HEK293 (cell line): ENCODE measurements at regions of chr11 and their contacts with region 1.

Region 1: DNA sequence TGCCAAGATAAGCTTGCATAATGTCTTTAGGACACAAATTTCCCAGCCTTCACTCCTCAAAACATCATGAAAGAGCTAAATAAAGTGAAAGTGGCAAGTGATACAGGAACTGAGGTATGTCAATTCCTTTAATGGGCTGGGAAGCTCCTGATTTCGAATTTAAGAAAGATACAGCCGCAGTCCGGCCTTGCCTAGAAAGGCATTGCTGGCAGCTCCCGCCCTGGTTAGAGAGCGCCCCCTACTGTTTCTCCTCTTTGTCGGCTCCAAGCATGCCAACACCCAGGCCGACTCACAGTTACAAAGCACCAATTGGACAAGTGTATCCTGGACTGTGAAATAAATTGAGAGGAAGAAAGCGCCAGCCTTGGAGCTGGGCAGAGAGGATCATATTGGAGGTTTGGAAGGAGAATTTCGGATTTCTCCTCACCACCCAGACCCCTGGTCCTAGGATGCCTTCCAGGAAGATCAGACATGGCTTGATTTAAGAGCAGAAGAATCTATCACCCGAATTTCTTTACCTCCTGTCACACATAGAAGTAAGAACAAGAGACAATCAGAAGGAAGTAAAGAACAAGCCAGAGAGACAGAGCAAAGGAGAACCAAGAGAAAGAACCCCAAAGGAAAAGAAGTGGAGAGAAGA is 84.0 kb downstream of the FAM76B start:
- H3K4me3 ChIP-seq: no peak overlapping the region
- H3K27ac ChIP-seq: no peak overlapping the region
- H3K4me1 ChIP-seq: no peaks in the 10 kb centered on the region
- CTCF ChIP-seq: peak; percentile 58; the same call in 1 of the 2 replicates

Region 2: DNA sequence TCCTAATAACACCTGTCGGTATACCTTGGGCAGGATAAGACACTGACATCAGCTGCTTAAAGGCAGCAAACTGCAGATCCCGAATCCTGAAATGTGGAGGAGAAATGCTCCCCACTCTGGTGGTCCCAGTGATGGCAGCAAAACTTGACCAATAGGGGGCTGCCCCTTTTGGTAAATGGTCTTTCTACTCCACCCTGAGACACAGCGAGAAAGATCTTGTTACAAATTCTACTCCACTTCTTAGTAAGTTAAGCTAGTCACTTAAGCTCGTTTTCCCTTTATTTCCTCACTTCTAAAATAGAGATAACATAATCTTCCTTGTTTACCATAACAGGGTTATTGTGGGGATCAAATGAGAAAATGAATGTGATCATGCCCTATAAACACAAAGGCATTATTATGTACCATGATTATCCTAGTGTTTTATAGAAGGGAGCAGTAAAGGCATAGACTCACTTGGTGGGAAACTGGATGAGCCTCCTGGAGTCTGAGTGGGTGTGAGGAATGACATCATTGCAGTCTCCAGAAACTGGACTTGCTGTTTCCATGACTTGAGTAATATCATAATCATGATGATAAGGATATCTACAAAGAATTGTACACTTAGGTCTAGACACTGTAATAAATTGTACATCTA is 565.1 kb before region 1 on chr11:
- CTCF ChIA-PET with region 1: no interaction called
- POLR2A ChIA-PET with region 1: no interaction called
- H3K4me3 ChIP-seq: no peak overlapping the region
- H3K27ac ChIP-seq: no peak overlapping the region
- H3K4me1 ChIP-seq: no peaks in the 10 kb centered on the region
- CTCF ChIP-seq: no peak

Region 3: DNA sequence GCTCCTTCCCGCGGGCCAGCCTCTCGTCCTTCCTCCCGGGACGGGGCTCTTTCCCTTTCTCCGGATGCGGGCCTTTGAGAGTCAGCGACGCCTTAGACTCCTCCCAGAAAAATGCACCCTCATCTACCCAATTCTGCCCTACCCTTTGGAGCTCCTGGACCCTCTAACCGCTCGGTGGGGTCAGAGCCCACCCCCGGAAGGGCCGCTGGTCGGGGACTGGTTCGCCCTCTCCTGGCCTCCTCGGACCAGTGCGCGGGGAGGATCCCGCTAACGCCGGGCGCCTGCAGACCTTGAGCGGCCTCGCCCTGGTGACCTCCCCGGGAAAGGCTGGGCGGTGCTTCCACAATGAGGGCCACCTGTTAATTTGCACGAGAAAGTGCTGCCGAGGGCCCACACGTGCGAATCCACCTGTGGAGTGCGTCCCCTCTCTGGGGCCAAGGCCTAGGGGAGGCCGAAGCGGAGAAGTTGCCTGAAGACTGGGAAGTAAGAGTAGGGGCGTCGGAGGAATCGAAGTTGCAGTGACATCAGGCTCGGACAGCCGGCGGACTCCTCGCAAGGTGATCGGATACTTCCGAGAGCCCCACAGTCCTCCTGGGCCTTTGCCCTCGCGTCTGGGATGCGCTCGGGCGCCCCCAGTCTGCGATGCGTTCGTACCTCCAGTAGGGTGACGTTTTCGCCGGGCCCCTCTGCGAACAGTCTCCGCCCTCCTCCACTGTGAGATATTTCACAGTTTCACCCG is 554.5 kb before region 1 on chr11:
- CTCF ChIA-PET with region 1: interaction called, 169 read pairs
- POLR2A ChIA-PET with region 1: no interaction called
- H3K4me3 ChIP-seq: peak overlapping the region; percentile 24
- H3K27ac ChIP-seq: no peak overlapping the region; the same call in 1 of the 2 replicates
- H3K4me1 ChIP-seq: no peaks in the 10 kb centered on the region; the same call in none of the 2 replicates
- CTCF ChIP-seq: peak; percentile 62; the same call in 1 of the 2 replicates

Region 4: GRCh38 chr11:95499516-95500135 is 206.0 kb before region 1 on chr11:
- CTCF ChIA-PET with region 1: interaction called, 10 read pairs
- POLR2A ChIA-PET with region 1: no interaction called
- H3K4me3 ChIP-seq: no peak overlapping the region
- H3K27ac ChIP-seq: no peak overlapping the region
- H3K4me1 ChIP-seq: peaks cover 6% of the 10 kb centered on the region
- CTCF ChIP-seq: no peak

Region 5: GRCh38 chr11:95545116-95545875 is 160.3 kb before region 1 on chr11:
- CTCF ChIA-PET with region 1: interaction called, 12 read pairs
- POLR2A ChIA-PET with region 1: no interaction called
- H3K4me3 ChIP-seq: no peak overlapping the region
- H3K27ac ChIP-seq: no peak overlapping the region
- H3K4me1 ChIP-seq: no peaks in the 10 kb centered on the region
- CTCF ChIP-seq: no peak

Region 6: DNA sequence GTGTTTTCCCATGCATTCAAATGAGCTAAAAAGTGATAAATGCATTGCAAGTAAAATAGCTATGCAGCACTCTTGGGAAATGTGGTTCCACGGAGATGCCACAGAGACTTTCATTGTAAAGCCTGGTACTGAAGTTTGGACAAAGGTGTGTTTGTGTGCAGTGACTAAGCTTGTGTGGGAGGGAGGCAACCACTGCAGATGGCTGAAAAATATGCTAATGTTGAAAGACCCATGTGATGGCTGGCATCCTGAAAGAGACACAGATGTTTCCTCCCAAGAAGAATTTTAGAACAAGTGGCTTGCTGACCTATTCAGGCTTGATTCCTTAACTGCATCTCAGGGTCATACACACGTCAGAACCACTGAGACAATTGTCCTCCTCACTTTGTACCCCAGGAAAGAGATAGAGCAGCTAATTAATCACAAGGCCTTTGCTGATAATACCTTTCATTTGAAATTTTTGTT is 10.2 kb after region 1 on chr11:
- CTCF ChIA-PET with region 1: interaction called, 15 read pairs
- POLR2A ChIA-PET with region 1: no interaction called
- H3K4me3 ChIP-seq: no peak overlapping the region
- H3K27ac ChIP-seq: no peak overlapping the region
- H3K4me1 ChIP-seq: no peaks in the 10 kb centered on the region
- CTCF ChIP-seq: no peak